ENCODE measurements at regions of chr6 and their contacts with region 1.

Region 1: GRCh38 chr6:117167520-117168271 is 97.7 kb upstream of the VGLL2 start:
- DNase-seq: no peak
- ATAC-seq: 0 out of 2 replicates have a peak, but pooled peaks have one; percentile 48
- H3K4me3 ChIP-seq: no peak overlapping the region
- H3K27ac ChIP-seq: no peak overlapping the region
- H3K4me1 ChIP-seq: no peaks in the 10 kb centered on the region
- H3K27me3 ChIP-seq: no peaks in the 10 kb centered on the region
- CTCF ChIP-seq: no peak

Region 2: DNA sequence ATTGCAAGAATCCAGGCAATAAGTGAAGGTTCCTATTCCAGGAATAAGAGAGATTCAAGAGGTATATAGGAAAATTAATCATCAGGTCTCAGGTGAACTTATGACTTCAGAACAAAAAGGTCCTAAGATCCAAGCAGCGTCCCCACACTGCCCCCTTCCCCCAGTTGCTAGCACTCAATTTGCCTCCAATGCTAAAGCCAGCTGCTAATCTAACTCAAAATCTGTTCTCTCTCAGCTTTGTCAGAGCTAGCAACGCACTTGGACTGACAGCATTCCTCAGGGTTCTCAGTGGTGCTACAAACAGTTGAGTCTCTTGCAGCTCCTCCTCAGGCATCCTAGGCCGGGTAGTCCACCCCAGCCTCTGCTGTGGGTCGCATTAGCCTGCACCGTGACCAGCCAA is 142.4 kb before region 1 on chr6:
- CTCF ChIA-PET with region 1: no interaction called
- POLR2A ChIA-PET with region 1: interaction called, 11 read pairs
- in situ Hi-C with region 1: no loop called
- intact Hi-C with region 1: no loop called
- DNase-seq: no peak
- ATAC-seq: no peak
- H3K4me3 ChIP-seq: no peak overlapping the region
- H3K27ac ChIP-seq: no peak overlapping the region
- H3K4me1 ChIP-seq: no peaks in the 10 kb centered on the region
- H3K27me3 ChIP-seq: no peaks in the 10 kb centered on the region
- CTCF ChIP-seq: no peak

Measured in Panc1 (cell line).